IMR-90 (cell line): ENCODE measurements at regions of chr2 and their contacts with region 1.

Region 1: DNA sequence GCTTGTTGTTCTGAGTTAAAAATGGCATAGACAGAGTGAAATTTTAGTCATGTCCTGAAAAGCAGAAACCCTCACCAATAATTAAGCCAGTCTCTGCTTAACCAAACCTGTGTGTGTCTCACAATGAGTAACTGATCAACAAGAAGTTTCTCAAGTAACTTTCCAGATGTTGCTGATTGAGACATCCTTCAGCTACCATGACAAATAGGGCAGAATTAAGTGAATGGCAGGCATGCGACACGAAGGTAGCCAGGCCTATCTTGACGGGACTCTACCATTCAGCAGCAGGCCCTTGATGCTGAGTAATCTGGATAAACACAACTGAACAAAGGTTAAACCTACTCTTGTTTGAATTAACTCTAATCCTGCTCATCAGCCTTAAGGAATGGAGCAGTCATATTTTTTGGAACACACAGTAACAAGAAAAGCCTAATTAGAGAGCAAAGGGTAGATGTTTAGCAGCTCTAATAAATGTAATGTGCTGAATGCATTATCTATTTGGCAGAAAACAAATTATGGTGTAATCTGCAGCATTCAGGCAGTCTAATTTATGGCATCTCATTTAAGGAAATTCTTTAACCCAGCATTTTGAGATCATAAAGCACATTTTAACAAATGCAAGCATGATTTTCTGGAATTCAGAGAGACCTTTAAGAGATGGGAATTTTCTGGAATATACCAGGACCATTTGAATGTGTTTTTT is 159.5 kb upstream of the EPHA4 start:
- DNase-seq: no peak
- ATAC-seq: no peak
- H3K4me3 ChIP-seq: no peak overlapping the region
- H3K27ac ChIP-seq: no peak overlapping the region
- H3K4me1 ChIP-seq: no peaks in the 10 kb centered on the region
- H3K27me3 ChIP-seq: no peaks in the 10 kb centered on the region
- CTCF ChIP-seq: no peak
- POLR2A ChIP-seq: no peak
- RAD21 ChIP-seq: no peak

Region 2: DNA sequence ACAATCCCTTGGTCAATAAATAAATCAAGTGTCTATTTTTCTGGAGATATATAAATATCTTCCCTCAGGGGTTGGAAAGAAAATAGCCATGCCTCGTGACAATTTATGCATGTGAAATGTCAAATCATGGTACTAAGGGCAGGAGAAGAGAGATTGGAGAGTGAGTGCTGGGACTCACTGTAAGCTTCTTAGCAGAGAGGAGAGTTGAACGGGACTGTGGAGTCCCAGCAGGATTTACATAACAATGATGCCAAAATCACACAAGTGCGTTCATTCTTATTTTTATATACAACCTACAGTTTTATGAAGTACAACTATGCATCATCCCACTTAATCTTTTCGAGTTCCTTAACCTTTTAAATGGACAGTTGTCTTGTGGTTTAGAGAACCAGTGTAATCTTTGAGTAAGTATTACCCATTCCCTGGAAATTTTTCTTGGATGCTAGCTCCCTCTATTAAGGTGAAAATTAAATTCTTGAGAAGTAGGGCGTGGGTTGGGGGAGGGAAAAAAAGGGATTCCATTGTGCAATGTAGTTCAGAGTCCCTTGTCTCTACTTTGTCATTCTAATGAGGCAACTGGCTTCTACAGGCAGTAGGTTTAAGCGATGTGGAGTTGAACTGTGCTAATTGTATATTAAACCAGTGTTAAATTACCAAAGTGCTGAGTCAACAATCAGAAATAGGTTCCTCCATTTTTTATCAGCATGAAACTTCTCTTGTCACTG is 15.9 kb before region 1 on chr2:
- CTCF ChIA-PET with region 1: no interaction called
- POLR2A ChIA-PET with region 1: no interaction called
- dilution Hi-C with region 1: no loop called
- in situ Hi-C with region 1: no loop called
- intact Hi-C with region 1: loop called (anchors 2 kb)
- DNase-seq: no peak
- ATAC-seq: no peak
- H3K4me3 ChIP-seq: no peak overlapping the region
- H3K27ac ChIP-seq: no peak overlapping the region
- H3K4me1 ChIP-seq: no peaks in the 10 kb centered on the region
- H3K27me3 ChIP-seq: no peaks in the 10 kb centered on the region
- CTCF ChIP-seq: no peak
- POLR2A ChIP-seq: no peak
- RAD21 ChIP-seq: no peak

Region 3: GRCh38 chr2:221850059-221850458 is 118.5 kb after region 1 on chr2:
- CTCF ChIA-PET with region 1: no interaction called
- POLR2A ChIA-PET with region 1: no interaction called
- dilution Hi-C with region 1: no loop called
- in situ Hi-C with region 1: no loop called
- intact Hi-C with region 1: no loop called
- DNase-seq: no peak
- ATAC-seq: no peak
- H3K4me3 ChIP-seq: no peak overlapping the region
- H3K27ac ChIP-seq: no peak overlapping the region
- H3K4me1 ChIP-seq: no peaks in the 10 kb centered on the region
- H3K27me3 ChIP-seq: no peaks in the 10 kb centered on the region
- CTCF ChIP-seq: no peak
- POLR2A ChIP-seq: no peak
- RAD21 ChIP-seq: no peak